Spleen (tissue), 13 donors: ENCODE measurements at regions of chr10 and their contacts with region 1.

Region 1: GRCh38 chr10:119859420-119860258 is 13.0 kb downstream of the MCMBP start:
- DNase-seq: no peak
- H3K4me3 ChIP-seq: no peak overlapping the region
- H3K27ac ChIP-seq: peak overlapping the region in 2 of 8 donors; percentile 4 to 11
- H3K4me1 ChIP-seq: peaks cover 0 to 49% (median 22%) of the 10 kb centered on the region in 6 donors
- H3K27me3 ChIP-seq: no peaks in the 10 kb centered on the region
- CTCF ChIP-seq: peak in 9 of 11 experiments; percentile 35 to 66 (median 58)
- POLR2A ChIP-seq: no peak

Region 2: GRCh38 chr10:119737827-119738226 is 121.8 kb before region 1 on chr10:
- intact Hi-C with region 1: no loop called
- DNase-seq: no peak
- H3K4me3 ChIP-seq: no peak overlapping the region
- H3K27ac ChIP-seq: peak overlapping the region in 4 of 8 donors; percentile 2 to 44 (median 8)
- H3K4me1 ChIP-seq: peaks cover 5 to 37% (median 14%) of the 10 kb centered on the region in 6 donors
- H3K27me3 ChIP-seq: no peaks in the 10 kb centered on the region
- CTCF ChIP-seq: no peak
- POLR2A ChIP-seq: no peak

Region 3: GRCh38 chr10:119750391-119751230 is 109.0 kb before region 1 on chr10:
- intact Hi-C with region 1: loop called (anchors 5 kb)
- DNase-seq: peak; percentile 80
- H3K4me3 ChIP-seq: no peak overlapping the region
- H3K27ac ChIP-seq: no peak overlapping the region
- H3K4me1 ChIP-seq: peaks cover 0 to 23% (median 10%) of the 10 kb centered on the region in 6 donors
- H3K27me3 ChIP-seq: no peaks in the 10 kb centered on the region
- CTCF ChIP-seq: peak; percentile 74 to 93 (median 89)
- POLR2A ChIP-seq: no peak

Region 4: DNA sequence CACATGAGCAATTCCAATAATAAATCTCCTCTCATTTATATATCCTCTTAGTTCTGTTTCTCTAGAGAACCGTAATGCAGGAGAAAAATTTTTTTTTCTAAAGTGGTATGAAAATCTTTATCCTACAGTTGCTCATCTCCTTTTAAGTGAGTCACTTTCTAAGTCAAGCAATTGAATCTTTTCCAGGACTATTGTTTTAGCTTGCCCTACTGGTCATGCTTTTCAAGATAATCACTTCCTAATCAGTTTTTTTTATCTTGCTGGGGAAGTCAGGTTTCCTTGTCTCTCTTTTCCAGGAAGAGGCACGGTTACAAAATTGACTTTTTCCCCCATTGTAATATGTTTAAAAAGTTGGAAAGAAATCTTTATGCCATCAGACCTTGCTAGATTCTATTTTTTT is 89.8 kb before region 1 on chr10:
- intact Hi-C with region 1: no loop called
- DNase-seq: no peak
- H3K4me3 ChIP-seq: no peak overlapping the region
- H3K27ac ChIP-seq: peak overlapping the region in 4 of 8 donors; percentile 0 to 48 (median 22)
- H3K4me1 ChIP-seq: peaks cover 0 to 16% (median 11%) of the 10 kb centered on the region in 6 donors
- H3K27me3 ChIP-seq: no peaks in the 10 kb centered on the region
- CTCF ChIP-seq: no peak
- POLR2A ChIP-seq: no peak